GM10248 (cell line): ENCODE measurements at regions of chr1 and their contacts with region 1.

Region 1: DNA sequence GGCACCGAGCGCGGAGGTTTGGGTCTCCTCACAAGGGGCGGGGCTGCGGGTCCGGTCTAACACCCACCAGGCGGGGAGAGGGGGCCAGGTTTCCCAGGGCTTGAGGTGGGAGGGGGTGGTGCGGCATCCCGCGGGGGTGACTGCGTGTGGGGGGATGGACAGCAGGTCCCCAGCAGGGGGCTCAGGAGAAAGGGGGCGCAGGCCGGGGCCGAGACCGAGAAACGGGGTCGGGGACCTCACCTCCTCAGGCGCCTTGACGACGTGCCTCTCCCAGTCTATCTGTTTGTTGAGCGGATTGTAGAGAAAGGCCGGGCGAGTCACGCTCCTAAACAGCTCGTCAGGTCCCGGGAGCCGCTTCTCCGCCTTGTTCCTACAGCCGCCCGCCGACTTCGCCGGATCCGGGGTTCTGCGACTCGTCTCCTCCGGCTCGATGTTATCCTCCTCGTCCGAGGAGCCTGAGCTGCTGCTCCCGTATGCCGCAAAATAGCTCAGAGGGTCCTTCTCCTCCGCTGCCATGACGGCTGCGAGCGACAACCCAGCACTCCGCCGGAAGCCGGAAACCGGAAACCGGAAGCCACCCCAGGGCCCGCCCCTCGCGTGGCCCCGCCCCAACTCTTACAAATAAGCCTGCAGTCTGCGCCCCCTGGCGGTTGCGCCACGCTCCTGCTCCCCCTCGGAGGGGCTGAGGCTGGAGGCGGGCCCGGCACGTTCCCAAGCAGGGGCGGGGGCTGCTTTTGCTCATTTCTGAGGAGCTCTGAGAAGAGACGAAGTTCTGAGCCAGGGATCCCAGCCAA is at the start of gene C1orf52:
- DNase-seq: peak; percentile 93
- CTCF ChIP-seq: peak; percentile 95

Region 2: DNA sequence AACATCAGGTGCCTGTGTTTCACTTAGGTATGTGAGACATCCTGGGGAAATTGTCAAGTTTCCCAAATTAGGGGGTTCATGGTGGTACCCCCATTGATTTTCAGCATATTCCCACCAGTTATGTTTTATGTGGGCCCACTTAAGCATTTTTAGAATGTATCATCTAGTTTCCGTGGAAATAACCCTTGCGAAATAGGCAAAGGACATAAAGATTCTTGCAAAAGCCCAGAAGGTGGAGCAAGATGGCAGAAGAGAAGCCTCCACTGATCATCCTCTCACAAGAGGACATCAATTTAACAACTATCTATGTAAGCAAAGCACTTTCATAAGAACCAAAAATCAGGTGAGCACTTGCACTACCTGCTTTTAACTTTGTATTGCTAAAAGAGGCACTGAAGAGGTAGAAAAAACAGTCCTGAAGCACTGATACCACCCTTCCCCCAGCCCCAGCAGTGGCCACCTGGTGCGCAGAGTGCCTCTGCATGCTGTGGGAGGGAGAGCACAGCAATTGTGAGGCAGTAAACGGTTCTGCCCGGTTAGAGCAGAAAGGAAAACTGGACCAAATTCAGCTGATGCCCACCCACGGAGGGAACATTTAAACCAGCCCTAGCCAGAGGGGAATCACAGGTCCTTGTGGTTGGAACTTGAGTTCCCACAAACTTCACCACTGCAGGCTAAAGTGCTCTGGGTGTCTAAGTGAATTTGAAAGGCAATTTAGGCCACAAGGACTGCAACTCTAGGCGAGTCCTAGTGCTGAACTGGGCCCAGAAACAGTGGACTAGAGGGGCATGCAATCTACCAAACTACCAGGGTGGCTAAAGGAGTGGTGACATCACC is 285.6 kb before region 1 on chr1:
- CTCF ChIA-PET with region 1: interaction called, 15 read pairs
- POLR2A ChIA-PET with region 1: no interaction called
- DNase-seq: no peak
- CTCF ChIP-seq: peak; percentile 19

Region 3: DNA sequence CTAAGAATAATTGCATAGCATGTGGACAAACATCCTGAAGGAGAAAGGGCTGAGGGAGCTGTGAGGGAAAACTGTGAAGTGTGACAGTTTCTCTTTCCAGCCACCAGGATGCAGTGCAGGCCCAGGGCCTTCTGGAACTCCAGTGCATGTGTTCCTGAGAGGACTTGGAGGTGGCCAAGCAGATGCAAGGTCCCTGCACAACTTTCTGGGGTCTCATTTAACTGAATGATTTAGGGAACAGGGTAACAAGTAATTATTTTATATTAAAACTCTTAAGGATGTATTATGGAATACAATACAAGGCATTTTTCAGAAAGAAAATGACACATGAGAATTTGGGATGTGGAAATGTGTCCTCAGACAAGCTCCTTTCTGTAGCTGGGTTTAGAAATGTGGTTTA is 149.8 kb before region 1 on chr1:
- CTCF ChIA-PET with region 1: interaction called, 69 read pairs
- POLR2A ChIA-PET with region 1: no interaction called
- DNase-seq: peak; percentile 64
- CTCF ChIP-seq: peak; percentile 69

Region 4: DNA sequence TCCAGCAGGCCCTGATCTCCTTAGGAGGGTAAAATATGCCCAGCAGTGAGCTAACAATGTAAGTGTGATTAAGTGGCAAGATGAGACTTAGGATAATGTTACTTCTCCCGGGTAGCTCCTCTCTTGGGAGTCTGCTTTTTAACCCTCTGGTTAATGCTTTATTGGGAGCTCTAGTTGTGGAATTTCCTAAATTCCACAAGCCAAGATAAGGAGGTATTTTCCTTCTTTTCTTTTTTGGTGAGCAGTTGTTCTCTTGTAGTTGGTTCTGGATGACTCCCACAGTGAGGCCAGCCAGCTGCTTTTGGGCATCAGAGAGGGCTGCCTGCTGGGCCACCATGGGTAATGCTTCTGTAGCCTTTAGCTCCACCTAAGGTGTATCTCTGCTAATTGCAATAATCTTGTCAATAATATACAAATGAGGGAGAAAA is 19.1 kb before region 1 on chr1:
- CTCF ChIA-PET with region 1: interaction called, 20 read pairs
- POLR2A ChIA-PET with region 1: no interaction called
- DNase-seq: peak; percentile 24
- CTCF ChIP-seq: peak; percentile 31

Region 5: GRCh38 chr1:85276215-85276977 is 17.1 kb after region 1 on chr1 and contains the start of gene BCL10:
- CTCF ChIA-PET with region 1: interaction called, 203 read pairs
- POLR2A ChIA-PET with region 1: interaction called, 9 read pairs
- DNase-seq: peak; percentile 98
- CTCF ChIP-seq: no peak

Region 6: DNA sequence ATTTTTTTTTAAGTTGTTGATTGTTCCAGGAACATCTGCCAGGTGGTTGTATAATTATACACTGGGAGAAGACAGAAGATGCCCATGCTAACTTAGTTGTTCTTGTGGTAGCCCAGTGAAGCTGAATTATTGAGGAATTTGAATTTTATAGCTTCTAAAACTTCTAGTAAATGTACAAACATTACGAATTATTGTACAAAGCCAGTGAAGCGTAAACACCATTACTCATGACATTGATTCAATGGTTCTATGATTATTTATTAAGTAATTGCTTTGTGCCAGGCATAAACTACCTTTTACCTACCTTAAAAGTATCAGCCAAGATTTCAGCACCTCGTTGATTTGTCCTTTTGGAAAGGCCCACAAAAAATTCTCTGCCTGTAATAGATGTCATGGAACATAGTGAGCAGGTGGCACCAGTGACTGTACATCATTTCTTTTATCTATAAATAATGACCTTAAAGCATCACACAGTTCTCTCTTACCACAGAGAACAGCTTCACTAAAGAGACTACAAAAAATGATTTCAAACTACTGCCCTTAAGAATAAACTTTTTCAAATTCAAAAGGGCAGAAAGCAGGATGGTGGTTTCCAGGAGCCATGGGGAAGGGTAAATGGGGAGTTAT is 92.0 kb after region 1 on chr1:
- CTCF ChIA-PET with region 1: no interaction called
- POLR2A ChIA-PET with region 1: no interaction called
- DNase-seq: no peak
- CTCF ChIP-seq: no peak

Region 7: GRCh38 chr1:85397490-85398032 is 138.2 kb after region 1 on chr1:
- CTCF ChIA-PET with region 1: no interaction called
- POLR2A ChIA-PET with region 1: no interaction called
- DNase-seq: no peak
- CTCF ChIP-seq: no peak